Endothelial cell of umbilical vein (primary cell): ENCODE measurements at regions of chr11 and their contacts with region 1.

Region 1: GRCh38 chr11:72091005-72091691 is 10.5 kb downstream of the LRRC51 start:
- DNase-seq: peak; percentile 73
- H3K4me3 ChIP-seq: no peak overlapping the region
- H3K27ac ChIP-seq: no peak overlapping the region
- H3K4me1 ChIP-seq: peaks cover 3% of the 10 kb centered on the region
- H3K27me3 ChIP-seq: no peaks in the 10 kb centered on the region
- CTCF ChIP-seq: peak; percentile 84 to 87
- POLR2A ChIP-seq: no peak

Region 2: DNA sequence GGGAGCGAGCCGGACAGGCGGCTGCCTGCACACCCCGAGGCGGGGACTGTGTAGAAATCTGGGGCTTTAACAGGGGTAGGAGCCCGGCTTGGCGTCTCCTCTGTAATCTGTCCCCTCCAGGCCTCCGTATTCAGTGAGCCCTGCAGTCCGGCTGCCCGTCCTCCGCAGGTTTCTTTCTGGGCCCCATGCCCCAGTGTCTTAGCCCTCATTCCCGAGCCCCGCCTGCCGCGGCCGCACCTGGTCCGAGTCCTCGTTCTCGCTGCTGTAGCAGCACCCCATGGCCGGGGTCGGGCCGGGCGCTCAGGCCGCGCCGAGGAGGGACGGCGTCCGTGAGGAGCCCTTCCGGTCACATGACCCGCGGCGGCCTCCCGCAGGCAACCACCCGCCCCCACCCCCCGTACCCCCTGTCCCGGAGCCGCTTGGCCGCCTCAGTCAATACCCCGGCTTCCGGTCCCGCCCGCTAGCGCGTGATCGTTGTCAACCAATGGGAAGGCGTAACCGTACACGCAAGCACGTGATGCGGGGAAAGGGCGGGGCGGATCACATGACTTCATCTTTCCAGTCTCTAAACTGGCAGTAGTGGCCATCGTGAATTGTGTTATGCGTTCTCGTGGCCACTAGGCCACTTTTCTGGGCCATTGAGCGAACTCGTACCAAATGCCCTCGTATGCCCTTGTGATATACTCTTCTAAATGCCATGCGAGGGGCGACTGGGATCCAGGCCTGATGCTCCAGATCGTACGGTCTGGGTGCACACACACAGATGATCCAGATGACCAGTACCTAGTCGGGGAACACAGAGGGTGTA is 12.0 kb after region 1 on chr11 and contains the start of gene LAMTOR1:
- CTCF ChIA-PET with region 1: interaction called, 16 read pairs
- POLR2A ChIA-PET with region 1: no interaction called
- dilution Hi-C with region 1: no loop called
- intact Hi-C with region 1: no loop called
- DNase-seq: peak; percentile 99
- H3K4me3 ChIP-seq: peak within 1 kb of the TSS; percentile 74 to 97 (median 86)
- H3K27ac ChIP-seq: peak within 1 kb of the TSS; percentile 88
- H3K4me1 ChIP-seq: peaks cover 26% of the 10 kb centered on the region
- H3K27me3 ChIP-seq: no peaks in the 10 kb centered on the region
- CTCF ChIP-seq: peak; percentile 34 to 38
- POLR2A ChIP-seq: peak; percentile 92
- total RNA-seq, gene LAMTOR1: 91.1 and 95.1 TPM in 2 replicates

Region 3: DNA sequence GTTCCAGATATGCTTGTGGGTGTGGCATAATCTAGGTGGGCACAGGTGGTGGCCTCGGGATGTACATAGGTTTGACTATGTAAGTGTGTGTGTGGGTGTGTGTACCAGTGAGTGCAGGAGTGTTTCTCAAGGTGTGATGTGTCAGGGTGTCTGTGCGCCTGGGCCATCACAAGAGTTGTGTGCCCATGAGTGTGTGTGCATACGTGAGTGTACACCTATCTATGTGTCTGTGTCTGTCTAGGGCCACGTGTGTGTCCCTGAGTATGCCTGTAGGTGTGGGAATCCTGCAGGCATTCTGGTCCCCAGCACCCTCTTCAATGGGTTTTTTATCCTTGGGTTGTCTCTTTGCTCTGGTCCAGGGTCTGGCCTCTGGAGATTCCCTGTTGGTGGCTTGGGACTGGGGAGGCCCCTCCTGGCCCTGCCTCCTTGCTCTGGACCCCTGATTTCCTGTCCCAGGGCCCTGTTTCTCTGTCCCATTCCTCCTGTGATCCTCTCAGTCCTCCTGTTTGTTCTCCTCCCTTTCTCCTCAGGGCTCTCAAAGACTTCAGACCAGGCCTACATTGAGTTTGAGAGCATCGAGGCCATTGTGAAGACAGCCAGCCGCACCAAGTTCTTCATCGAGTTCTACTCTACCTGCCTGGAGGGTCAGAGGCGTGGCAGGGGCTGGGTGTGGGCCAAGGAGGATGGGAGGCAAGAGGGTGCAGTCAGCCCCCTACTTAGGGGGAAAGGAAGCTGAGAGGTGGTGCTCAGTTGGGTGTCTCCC is 142.8 kb after region 1 on chr11:
- CTCF ChIA-PET with region 1: no interaction called
- POLR2A ChIA-PET with region 1: no interaction called
- dilution Hi-C with region 1: no loop called
- intact Hi-C with region 1: no loop called
- DNase-seq: no peak
- H3K4me3 ChIP-seq: no peak overlapping the region
- H3K27ac ChIP-seq: no peak overlapping the region
- H3K4me1 ChIP-seq: no peaks in the 10 kb centered on the region
- H3K27me3 ChIP-seq: peaks cover 0 to 2% of the 10 kb centered on the region in 2 experiments
- CTCF ChIP-seq: no peak
- POLR2A ChIP-seq: peak; percentile 44